AG04449 (cell line): ENCODE measurements at regions of chr11 and their contacts with region 1.

Region 1: DNA sequence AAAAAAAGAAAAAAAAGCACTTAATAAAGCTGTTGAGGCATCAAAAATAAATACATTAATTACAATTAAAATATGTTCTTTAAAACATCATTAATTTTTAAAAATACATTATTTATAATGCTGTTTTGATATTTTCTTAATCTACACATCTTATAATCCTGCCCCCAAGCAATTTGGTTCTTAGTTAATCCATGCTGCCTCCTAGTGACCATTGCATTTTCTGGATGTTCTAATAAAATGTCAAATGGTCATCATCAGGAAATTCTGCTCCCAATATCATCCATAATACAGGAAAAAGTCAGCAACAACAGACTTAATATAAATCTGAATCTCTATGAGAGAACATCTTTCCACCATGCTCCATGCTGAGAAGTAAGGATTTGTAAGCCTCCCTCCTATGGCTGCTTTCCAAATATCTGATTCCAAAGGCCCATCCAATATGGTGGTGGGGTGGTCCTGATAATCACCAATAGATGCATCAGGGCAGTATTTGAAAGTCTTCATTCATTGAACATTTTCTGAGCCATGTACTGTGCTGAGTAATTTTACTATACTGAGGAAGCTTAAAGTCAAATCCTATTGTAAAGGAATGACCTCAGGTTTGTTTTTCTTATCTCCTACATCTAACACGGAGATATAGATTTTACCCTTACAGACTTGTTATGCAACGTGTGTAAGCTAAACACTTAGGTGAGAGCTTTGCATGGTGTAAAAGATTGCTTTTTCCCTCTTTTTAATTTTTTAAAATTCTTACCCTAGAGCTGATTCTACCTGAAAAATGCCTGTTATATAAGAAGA is 124.7 kb upstream of the BMAL1 start:
- DNase-seq: no peak
- H3K4me3 ChIP-seq: no peak overlapping the region
- CTCF ChIP-seq: peak; percentile 42

Region 2: DNA sequence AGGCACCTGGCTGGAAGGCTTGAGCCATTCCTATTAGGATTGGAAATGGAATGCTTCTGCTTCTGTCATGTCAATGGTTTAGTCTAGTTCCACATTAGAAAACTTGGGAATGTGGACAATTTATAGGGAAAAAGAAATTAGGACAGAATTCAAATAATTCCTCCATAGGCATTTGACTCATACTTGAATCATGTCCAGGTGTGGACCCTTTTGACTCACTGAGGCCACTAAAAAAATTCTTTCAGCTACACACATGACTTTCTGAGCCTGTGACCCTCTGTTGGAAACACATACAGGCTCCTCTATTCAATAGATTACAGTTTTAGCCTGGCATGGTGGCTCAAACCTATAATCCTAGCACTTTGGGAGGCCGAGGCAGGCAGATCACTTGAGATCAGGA is 43.3 kb before region 1 on chr11:
- CTCF ChIA-PET with region 1: no interaction called
- POLR2A ChIA-PET with region 1: no interaction called
- DNase-seq: no peak
- H3K4me3 ChIP-seq: no peak overlapping the region
- CTCF ChIP-seq: no peak

Region 3: GRCh38 chr11:13120691-13121090 is 32.2 kb before region 1 on chr11:
- CTCF ChIA-PET with region 1: interaction called, 13 read pairs
- POLR2A ChIA-PET with region 1: no interaction called
- DNase-seq: peak; percentile 37
- H3K4me3 ChIP-seq: no peak overlapping the region
- CTCF ChIP-seq: no peak

Region 4: GRCh38 chr11:13140873-13141655 is 11.9 kb before region 1 on chr11:
- CTCF ChIA-PET with region 1: interaction called, 18 read pairs
- POLR2A ChIA-PET with region 1: no interaction called
- DNase-seq: no peak
- H3K4me3 ChIP-seq: no peak overlapping the region
- CTCF ChIP-seq: no peak

Region 5: DNA sequence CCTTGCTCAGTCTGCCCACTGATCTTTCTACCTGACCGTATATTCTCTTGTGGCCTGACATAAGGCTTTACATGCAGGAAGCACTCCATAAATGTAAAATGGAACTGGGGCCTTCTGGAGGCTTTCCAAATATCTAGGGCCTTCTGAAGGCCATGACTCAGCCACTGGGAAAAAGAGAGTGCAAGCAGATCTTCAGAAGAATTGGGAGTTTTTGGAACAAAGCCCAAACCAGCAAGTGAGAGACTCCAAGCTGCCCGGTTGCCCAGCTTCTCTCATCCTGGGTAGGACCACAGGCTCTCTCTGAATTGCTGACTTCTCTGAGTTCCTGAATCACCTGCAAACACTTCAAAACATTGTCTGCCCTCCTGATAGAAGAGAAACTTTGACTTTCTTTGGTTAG is 16.8 kb after region 1 on chr11:
- CTCF ChIA-PET with region 1: interaction called, 23 read pairs
- POLR2A ChIA-PET with region 1: no interaction called
- DNase-seq: peak; percentile 85
- H3K4me3 ChIP-seq: no peak overlapping the region
- CTCF ChIP-seq: no peak